Activated CD8-positive, alpha-beta T cell treated with anti-CD3 and anti-CD28 coated beads for 36 hours (primary cell): ENCODE measurements at regions of chr1 and their contacts with region 1.

Region 1: GRCh38 chr1:156927215-156928042 is 7.0 kb downstream of the LRRC71 start:
- DNase-seq: peak; percentile 83
- ATAC-seq: peak; percentile 70
- H3K4me3 Mint-ChIP-seq: peak overlapping the region; percentile 41
- H3K27ac Mint-ChIP-seq: no peak overlapping the region
- H3K4me1 Mint-ChIP-seq: peaks cover 32% of the 10 kb centered on the region
- H3K27me3 Mint-ChIP-seq: peaks cover 77% of the 10 kb centered on the region
- CTCF ChIP-seq: peak; percentile 78

Region 2: GRCh38 chr1:156910309-156910782 is 17.1 kb before region 1 on chr1:
- CTCF ChIA-PET with region 1: interaction called, 29 read pairs
- POLR2A ChIA-PET with region 1: interaction called, 4 read pairs
- intact Hi-C with region 1: no loop called
- DNase-seq: peak; percentile 76
- ATAC-seq: peak; percentile 83
- H3K4me3 Mint-ChIP-seq: no peak overlapping the region
- H3K27ac Mint-ChIP-seq: no peak overlapping the region
- H3K4me1 Mint-ChIP-seq: peaks cover 3% of the 10 kb centered on the region
- H3K27me3 Mint-ChIP-seq: peaks cover 13% of the 10 kb centered on the region
- CTCF ChIP-seq: peak; percentile 99